ENCODE measurements at regions of chr7 and their contacts with region 1.

Region 1: GRCh38 chr7:15015545-15016326 is 113.2 kb upstream of the DGKB start:
- DNase-seq: no peak
- H3K4me3 ChIP-seq: no peak overlapping the region
- H3K27me3 ChIP-seq: peaks cover 4% of the 10 kb centered on the region
- CTCF ChIP-seq: peak; percentile 68

Region 2: DNA sequence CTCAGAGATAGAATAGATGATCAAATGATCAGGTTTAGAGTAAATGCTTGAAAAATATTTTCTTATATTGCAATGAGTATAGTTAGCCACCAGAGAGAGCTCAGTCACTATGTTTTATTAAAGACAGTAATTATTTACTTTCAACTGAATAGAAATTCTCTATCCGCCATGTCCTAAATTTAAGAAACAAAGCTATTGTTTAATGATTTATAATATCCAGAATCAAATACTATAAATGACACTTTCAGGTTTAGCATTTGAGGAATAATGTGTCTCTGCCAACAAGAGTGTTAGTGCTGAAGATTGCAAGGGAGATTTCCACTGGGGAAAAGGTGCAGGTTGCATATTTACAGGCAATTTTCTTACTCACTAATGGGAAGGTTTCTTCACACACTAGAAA is 297.9 kb before region 1 on chr7:
- CTCF ChIA-PET with region 1: interaction called, 42 read pairs
- POLR2A ChIA-PET with region 1: no interaction called
- DNase-seq: no peak
- H3K4me3 ChIP-seq: no peak overlapping the region
- H3K27me3 ChIP-seq: 0 out of 2 replicates have a peak, but pooled peaks cover 1% of the 10 kb centered on the region
- CTCF ChIP-seq: peak; percentile 44

Region 3: DNA sequence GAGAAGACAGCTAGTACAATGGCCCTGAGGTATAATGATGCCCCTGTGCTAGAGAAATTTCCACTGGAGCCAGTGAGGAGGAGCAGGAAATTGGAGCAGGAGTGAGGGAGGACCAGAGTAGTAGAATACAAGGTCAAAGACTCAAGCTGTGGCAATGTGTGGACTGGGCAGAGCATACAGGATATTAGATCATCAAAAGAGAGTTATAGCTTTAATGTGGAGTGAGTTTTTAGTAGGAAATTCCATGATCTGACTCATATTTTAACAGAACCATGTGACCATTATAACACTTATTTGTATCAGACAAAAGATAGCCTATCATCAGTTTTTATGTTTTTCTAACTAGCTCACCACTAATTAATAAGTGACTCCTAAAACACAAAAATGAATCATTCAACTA is 267.3 kb before region 1 on chr7:
- CTCF ChIA-PET with region 1: no interaction called
- POLR2A ChIA-PET with region 1: no interaction called
- DNase-seq: peak; percentile 51
- H3K4me3 ChIP-seq: no peak overlapping the region
- H3K27me3 ChIP-seq: no peaks in the 10 kb centered on the region
- CTCF ChIP-seq: no peak

Region 4: DNA sequence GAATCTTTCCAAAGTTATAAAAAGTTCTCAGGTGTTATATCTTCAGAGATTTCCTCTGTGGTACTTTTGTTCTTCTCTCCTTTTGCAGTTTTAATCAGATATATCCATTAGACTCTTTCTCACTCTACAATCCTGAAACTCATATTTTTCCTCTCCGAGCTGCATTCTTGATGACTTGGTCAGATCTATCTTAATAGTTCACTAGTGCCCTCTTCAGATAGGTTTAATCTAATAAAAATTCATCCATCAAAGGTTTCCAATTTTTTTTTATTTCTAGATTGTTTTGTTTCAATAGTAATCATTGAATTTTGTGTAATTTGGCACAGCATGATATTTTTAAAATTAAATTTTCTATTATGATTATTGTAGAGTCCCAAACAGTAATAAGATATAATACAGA is 91.3 kb before region 1 on chr7:
- CTCF ChIA-PET with region 1: interaction called, 12 read pairs
- POLR2A ChIA-PET with region 1: no interaction called
- DNase-seq: no peak
- H3K4me3 ChIP-seq: no peak overlapping the region
- H3K27me3 ChIP-seq: no peaks in the 10 kb centered on the region
- CTCF ChIP-seq: no peak

Region 5: DNA sequence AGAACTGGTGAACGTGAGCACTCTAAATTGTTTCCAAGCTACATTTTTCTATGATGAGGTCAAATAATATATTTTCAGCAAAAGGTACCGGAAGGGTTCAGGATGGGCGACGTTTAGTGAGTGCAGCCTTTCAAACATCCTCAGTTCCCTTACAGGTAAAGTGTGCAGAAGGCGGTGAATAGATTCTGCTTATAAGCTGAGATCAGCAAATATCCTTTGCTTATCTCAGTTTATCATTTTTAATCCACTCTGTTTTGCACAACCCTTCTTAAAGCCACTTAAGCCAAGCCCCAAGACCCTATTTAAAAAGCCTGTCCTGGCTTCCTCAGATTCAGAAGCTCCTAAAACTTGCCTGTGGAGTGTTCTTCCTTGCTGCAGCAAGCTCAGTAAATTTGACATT is 10.1 kb before region 1 on chr7:
- CTCF ChIA-PET with region 1: interaction called, 16 read pairs
- POLR2A ChIA-PET with region 1: no interaction called
- DNase-seq: no peak
- H3K4me3 ChIP-seq: no peak overlapping the region
- H3K27me3 ChIP-seq: no peaks in the 10 kb centered on the region
- CTCF ChIP-seq: no peak